Activated CD4-positive, alpha-beta T cell treated with anti-CD3 and anti-CD28 coated beads for 36 hours (primary cell): ENCODE measurements at regions of chr4 and their contacts with region 1.

Region 1: GRCh38 chr4:705278-706082 is at the start of gene PCGF3:
- DNase-seq: peak; percentile 99
- ATAC-seq: peak; percentile 99
- H3K4me3 Mint-ChIP-seq: peak within 1 kb of the TSS; percentile 68
- H3K27ac Mint-ChIP-seq: no peak within 1 kb of the TSS
- H3K4me1 Mint-ChIP-seq: peaks cover 15% of the 10 kb centered on the region
- H3K27me3 Mint-ChIP-seq: no peaks in the 10 kb centered on the region
- total RNA-seq, gene PCGF3: 20.6 to 22.5 TPM

Region 2: GRCh38 chr4:337143-337931 is 368.1 kb before region 1 on chr4 and contains the start of gene ZNF141:
- CTCF ChIA-PET with region 1: no interaction called
- POLR2A ChIA-PET with region 1: no interaction called
- intact Hi-C with region 1: loop called in 1 of 2 experiments (anchors 1 kb)
- DNase-seq: peak; percentile 95
- ATAC-seq: peak; percentile 96
- H3K4me3 Mint-ChIP-seq: peak within 1 kb of the TSS; percentile 99
- H3K27ac Mint-ChIP-seq: peak within 1 kb of the TSS; percentile 100
- H3K4me1 Mint-ChIP-seq: peaks cover 24% of the 10 kb centered on the region
- H3K27me3 Mint-ChIP-seq: no peaks in the 10 kb centered on the region
- total RNA-seq, gene ZNF141: 26.5 to 35.3 TPM

Region 3: DNA sequence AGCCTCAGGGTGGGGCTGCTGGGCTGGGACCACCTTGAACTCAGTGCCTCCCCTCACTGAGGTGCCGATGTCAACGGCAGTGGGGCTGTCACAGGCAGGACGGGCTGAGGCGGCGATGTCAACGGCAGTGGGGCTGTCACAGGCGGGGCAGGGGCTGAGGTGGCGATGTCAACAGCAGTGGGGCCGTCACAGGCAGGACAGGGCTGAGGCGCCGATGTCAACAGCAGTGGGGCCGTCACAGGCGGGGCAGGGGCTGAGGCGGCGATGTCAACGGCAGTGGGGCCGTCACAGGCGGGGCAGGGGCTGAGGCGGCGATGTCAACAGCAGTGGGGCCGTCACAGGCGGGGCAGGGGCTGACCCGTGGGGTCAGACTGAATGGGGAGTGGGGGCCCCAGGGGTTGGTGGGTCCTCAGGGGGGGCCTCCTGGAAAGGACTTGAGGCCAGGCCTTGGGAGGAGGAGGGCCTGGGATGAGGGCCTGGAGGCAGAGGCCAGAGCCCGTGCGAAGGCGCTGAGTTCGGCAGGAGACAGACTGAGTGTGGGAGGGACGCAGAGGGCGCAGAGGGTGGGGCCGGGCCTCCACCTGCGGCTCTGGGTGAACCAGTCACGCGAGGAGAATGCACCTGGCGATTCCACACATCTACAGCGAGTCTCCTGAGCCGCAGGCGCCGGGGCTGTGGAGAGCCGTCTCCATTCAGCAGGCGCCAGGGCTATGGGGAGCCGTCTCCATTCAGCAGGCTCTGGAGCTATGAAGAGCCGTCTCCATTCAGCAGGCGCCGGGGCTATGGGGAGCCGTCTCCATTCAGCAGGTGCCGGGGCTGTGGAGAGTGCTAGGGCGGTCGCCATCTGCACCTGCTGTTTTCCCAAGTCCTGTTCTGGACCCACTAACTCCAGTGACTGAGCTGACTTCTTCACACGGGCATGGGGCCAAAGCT is 54.3 kb before region 1 on chr4:
- CTCF ChIA-PET with region 1: no interaction called
- POLR2A ChIA-PET with region 1: no interaction called
- intact Hi-C with region 1: no loop called
- DNase-seq: no peak
- ATAC-seq: no peak
- H3K4me3 Mint-ChIP-seq: no peak overlapping the region
- H3K27ac Mint-ChIP-seq: no peak overlapping the region
- H3K4me1 Mint-ChIP-seq: peaks cover 3% of the 10 kb centered on the region
- H3K27me3 Mint-ChIP-seq: peaks cover 3% of the 10 kb centered on the region

Region 4: DNA sequence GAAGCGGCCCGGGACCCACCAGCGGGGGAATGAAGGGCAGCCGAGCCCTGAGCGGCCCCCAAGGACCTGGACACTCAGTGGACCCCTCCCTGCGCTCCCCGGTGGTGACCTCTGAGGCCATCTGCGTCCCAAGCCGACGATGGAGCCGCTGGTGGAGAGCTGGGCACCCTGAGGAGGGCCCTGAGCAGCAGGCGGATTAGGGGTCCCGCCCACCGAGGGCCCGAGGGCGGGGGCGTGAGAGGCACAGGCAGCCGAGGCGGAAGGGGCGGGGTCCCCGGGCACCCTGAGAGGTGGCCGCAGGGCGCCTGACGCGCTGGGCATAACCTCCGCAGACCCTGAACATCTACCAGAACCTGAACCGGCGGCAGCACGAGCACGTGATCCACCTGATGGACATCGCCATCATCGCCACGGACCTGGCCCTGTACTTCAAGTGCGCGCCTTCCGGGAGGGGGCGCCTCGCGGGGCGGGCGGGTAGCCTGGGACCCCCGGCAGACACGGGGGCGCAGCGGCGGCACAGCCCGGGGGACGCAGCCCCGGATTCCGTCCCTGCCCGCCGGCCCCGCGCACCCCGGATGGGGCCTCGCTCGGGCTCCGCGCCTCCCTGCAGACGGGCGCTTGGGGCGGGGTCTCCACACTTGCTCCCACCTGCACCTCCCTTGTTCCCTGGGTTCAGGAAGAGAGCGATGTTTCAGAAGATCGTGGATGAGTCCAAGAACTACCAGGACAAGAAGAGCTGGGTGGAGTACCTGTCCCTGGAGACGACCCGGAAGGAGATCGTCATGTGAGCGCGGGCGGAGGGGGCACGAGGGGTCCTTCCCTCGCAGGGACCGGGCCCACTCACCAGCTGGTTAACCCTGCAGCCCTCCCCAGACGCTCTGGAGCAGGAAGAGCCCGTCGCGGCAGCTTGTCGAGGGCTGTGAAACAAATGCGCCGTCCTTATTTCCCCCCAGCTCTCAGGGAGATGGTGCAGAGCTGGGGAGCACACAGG is 41.7 kb before region 1 on chr4:
- CTCF ChIA-PET with region 1: no interaction called
- POLR2A ChIA-PET with region 1: interaction called, 3 read pairs
- intact Hi-C with region 1: loop called in 1 of 2 experiments (anchors 1 kb)
- DNase-seq: peak; percentile 85
- ATAC-seq: peak; percentile 70
- H3K4me3 Mint-ChIP-seq: peak overlapping the region; percentile 80
- H3K27ac Mint-ChIP-seq: peak overlapping the region; percentile 84
- H3K4me1 Mint-ChIP-seq: peaks cover 14% of the 10 kb centered on the region
- H3K27me3 Mint-ChIP-seq: no peaks in the 10 kb centered on the region

Region 5: DNA sequence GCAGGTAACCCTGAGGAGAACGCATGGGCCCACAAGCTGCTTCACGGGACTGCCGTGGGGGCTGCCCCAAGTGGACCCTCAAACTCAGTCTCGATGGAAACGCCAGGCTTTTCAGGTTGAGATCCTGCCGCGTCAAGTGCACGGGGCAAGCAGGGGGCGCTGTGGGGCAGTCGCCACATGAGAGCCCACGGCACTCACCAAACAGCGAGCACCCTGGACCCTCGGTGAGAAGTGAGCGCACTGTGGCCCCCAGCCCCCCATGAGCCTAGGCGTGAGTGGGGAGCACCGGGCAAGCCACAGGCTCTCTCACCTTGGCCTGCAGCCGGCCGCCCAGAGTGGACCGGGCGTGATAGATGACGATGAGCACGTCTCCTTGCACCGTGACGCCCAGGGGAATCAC is 171.3 kb after region 1 on chr4:
- CTCF ChIA-PET with region 1: no interaction called
- POLR2A ChIA-PET with region 1: no interaction called
- intact Hi-C with region 1: loop called in 1 of 2 experiments (anchors 1 kb)
- DNase-seq: peak; percentile 30
- ATAC-seq: no peak
- H3K4me3 Mint-ChIP-seq: no peak overlapping the region
- H3K27ac Mint-ChIP-seq: no peak overlapping the region
- H3K4me1 Mint-ChIP-seq: peaks cover 28% of the 10 kb centered on the region
- H3K27me3 Mint-ChIP-seq: no peaks in the 10 kb centered on the region

Region 6: GRCh38 chr4:973431-974397 is 268.2 kb after region 1 on chr4 and contains the start of gene DGKQ:
- CTCF ChIA-PET with region 1: no interaction called
- POLR2A ChIA-PET with region 1: no interaction called
- intact Hi-C with region 1: loop called in 1 of 2 experiments (anchors 1 kb)
- DNase-seq: peak; percentile 93
- ATAC-seq: peak; percentile 96
- H3K4me3 Mint-ChIP-seq: peak within 1 kb of the TSS; percentile 58
- H3K27ac Mint-ChIP-seq: no peak within 1 kb of the TSS
- H3K4me1 Mint-ChIP-seq: peaks cover 6% of the 10 kb centered on the region
- H3K27me3 Mint-ChIP-seq: no peaks in the 10 kb centered on the region
- total RNA-seq, gene DGKQ: 9.3 to 11.3 TPM